ENCODE measurements at regions of chr9 and their contacts with region 1.

Region 1: GRCh38 chr9:16202914-16203728 is 650.3 kb downstream of the CCDC171 start:
- DNase-seq: peak; percentile 87 to 90
- ATAC-seq: peak; percentile 99 to 100
- H3K4me3 ChIP-seq: no peak overlapping the region
- H3K27ac ChIP-seq: peak overlapping the region; percentile 88
- H3K4me1 ChIP-seq: peaks cover 40% of the 10 kb centered on the region
- CTCF ChIP-seq: no peak
- EP300 ChIP-seq: peak in 1 of 2 experiments; percentile 81; a peak in 2 of 5 replicates
- POLR2A ChIP-seq: no peak
- RAD21 ChIP-seq: peak; percentile 11 to 39; a peak in 2 of 5 replicates

Region 2: DNA sequence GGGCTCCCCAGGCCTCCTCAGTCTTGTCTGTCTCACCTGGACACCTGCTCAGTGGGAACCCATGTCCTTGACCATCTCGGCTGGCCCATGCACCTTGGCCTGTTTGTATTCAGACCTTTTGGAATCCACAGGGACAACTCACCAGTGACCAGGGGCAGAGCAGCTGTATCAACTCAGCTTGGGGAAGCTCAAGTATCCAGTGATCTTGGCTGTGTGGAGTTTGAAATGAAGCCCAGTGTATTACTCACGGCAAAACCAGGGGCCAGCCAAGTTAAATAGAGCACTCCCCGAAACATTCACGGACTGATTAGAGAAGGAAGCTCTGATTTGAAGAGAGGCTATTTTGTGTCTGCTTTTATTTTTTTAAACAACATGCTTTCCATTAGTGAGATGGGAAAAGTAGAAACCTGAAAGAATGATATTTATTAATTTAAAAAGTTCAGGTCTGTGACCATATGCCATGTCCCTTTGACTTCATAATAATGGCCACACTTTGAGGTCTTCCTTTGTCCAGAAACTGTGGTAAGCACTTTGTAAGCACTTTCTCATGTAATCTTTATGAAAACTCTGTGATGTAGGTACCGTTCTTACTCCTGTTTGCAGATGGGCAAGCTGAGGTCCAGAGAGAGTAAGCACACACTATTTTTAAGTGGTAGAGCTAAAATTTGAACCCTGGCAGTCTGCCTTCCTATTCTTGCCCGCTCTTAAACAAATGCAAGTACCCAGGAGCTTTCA is 10.8 kb after region 1 on chr9:
- CTCF ChIA-PET with region 1: interaction called, 5 read pairs
- POLR2A ChIA-PET with region 1: interaction called, 25 read pairs
- DNase-seq: peak; percentile 46 to 81
- ATAC-seq: peak; percentile 94 to 97
- H3K4me3 ChIP-seq: no peak overlapping the region
- H3K27ac ChIP-seq: peak overlapping the region; percentile 67 to 85
- H3K4me1 ChIP-seq: peaks cover 27% of the 10 kb centered on the region
- CTCF ChIP-seq: no peak
- EP300 ChIP-seq: peak in 1 of 2 experiments; percentile 38; a peak in 2 of 5 replicates
- POLR2A ChIP-seq: no peak
- RAD21 ChIP-seq: no peak; a peak in 2 of 5 replicates